Heart right ventricle (tissue), 16 donors: ENCODE measurements at regions of chr9 and their contacts with region 1.

Region 1: DNA sequence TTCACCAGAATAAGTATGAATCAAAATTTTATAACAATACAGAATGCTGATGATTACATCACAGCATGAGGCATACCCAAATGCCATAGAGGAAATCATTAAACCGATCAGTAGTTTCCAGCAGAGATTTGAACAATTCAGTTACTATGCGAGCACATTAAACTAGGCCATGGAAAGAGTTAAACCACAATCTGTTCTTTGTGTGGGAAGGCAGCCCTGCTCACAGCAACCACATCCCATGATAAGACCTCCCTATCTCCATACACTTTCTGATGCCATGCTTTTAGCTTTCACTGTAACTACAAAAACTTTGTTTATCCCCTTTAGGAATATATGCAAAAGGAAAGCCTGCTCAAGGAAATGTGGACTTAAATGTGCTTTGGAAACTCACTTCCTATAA is 4.5 kb downstream of the NFIB start:
- DNase-seq: no peak
- ATAC-seq: peak in 2 of 8 donors; percentile 20 to 21
- H3K4me3 ChIP-seq: peak overlapping the region; percentile 8 to 94 (median 76)
- H3K27ac ChIP-seq: peak overlapping the region; percentile 44 to 100 (median 96)
- H3K4me1 ChIP-seq: peaks cover 2 to 69% (median 48%) of the 10 kb centered on the region in 9 donors
- H3K27me3 ChIP-seq: peaks cover 0 to 37% (median 0%) of the 10 kb centered on the region in 7 donors
- CTCF ChIP-seq: no peak

Region 2: DNA sequence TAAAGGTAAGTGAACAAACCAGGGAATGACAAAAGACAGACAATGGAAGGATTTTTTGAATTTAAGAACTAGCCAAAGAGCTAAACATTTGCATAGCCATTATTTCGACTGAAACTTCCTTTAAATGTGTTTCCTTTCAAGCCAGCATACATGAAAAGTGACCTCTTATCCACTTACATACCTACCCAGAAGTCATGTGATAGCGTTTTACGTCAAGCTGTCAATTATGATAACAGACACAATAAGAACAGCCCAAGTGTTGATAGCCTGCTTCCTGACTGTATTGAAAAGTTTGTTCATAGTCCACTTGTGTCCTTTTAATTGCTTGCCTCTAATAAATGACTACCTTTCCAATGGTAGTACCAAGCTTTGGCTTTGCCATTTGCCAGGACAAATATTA is 201.4 kb before region 1 on chr9:
- intact Hi-C with region 1: loop called in 3 of 10 experiments (anchors 5 to 10 kb)
- DNase-seq: no peak
- ATAC-seq: peak in 7 of 8 donors; percentile 55 to 95 (median 93)
- H3K4me3 ChIP-seq: no peak overlapping the region
- H3K27ac ChIP-seq: peak overlapping the region in 9 of 10 donors; percentile 18 to 71 (median 48)
- H3K4me1 ChIP-seq: peaks cover 0 to 56% (median 20%) of the 10 kb centered on the region in 9 donors
- H3K27me3 ChIP-seq: no peaks in the 10 kb centered on the region
- CTCF ChIP-seq: no peak

Region 3: DNA sequence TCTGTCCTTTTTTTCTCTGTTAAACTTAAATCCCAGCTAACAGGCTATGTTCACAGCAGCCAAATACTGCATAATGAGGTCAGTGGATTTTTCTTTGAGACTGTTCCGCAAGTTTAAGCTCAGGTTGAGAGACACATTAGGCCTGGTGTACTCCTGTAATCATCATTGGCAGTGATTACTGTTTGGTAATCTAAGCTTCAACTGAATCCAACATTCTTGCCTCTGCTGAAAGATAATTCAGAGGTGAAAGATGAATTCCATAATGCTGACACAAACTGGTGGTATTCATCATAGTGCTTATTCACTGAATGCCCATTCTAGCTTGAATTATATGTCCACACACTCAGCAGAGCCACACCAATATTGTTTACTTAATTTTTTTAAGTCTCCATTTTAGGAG is 103.9 kb before region 1 on chr9:
- intact Hi-C with region 1: loop called in 2 of 10 experiments (anchors 2 to 5 kb)
- DNase-seq: no peak
- ATAC-seq: peak in 5 of 8 donors; percentile 41 to 72 (median 45)
- H3K4me3 ChIP-seq: no peak overlapping the region
- H3K27ac ChIP-seq: peak overlapping the region in 8 of 10 donors; percentile 48 to 84 (median 70)
- H3K4me1 ChIP-seq: peaks cover 5 to 93% (median 64%) of the 10 kb centered on the region in 9 donors
- H3K27me3 ChIP-seq: no peaks in the 10 kb centered on the region
- CTCF ChIP-seq: no peak

Region 4: DNA sequence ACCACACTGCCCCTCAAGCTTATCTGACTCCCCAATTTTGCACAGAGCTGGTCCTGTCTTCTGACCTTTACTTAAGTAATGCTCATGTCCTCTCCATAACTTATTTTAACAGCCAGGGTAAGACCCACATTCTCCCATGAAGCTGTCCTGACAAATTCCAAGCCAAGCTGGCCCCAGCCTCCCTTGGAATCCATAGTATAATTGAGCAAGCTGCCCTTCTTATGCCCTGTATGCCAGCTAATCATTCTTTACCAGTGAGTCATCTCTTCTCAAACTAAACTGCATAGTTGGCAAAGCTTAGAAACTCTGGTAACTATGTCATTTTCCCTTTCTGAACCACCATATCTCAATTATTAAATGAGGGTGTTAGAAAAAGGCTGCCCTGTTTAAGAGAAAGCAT is 87.8 kb before region 1 on chr9:
- intact Hi-C with region 1: no loop called
- DNase-seq: no peak
- ATAC-seq: peak; percentile 61 to 88 (median 80)
- H3K4me3 ChIP-seq: no peak overlapping the region
- H3K27ac ChIP-seq: peak overlapping the region in 7 of 10 donors; percentile 1 to 84 (median 79)
- H3K4me1 ChIP-seq: peaks cover 11 to 78% (median 64%) of the 10 kb centered on the region in 9 donors
- H3K27me3 ChIP-seq: no peaks in the 10 kb centered on the region
- CTCF ChIP-seq: no peak

Region 5: GRCh38 chr9:14251154-14252071 is 58.0 kb before region 1 on chr9:
- intact Hi-C with region 1: loop called in 5 of 10 experiments (anchors 5 to 10 kb)
- DNase-seq: peak; percentile 82 to 87
- ATAC-seq: peak; percentile 88 to 98 (median 94)
- H3K4me3 ChIP-seq: peak overlapping the region in 5 of 10 donors; percentile 7 to 23 (median 12)
- H3K27ac ChIP-seq: peak overlapping the region in 9 of 10 donors; percentile 49 to 82 (median 71)
- H3K4me1 ChIP-seq: peaks cover 20 to 87% (median 63%) of the 10 kb centered on the region in 9 donors
- H3K27me3 ChIP-seq: no peaks in the 10 kb centered on the region
- CTCF ChIP-seq: no peak

Region 6: GRCh38 chr9:14258660-14259239 is 50.7 kb before region 1 on chr9:
- intact Hi-C with region 1: loop called in 6 of 10 experiments (anchors 5 to 10 kb)
- DNase-seq: no peak
- ATAC-seq: no peak
- H3K4me3 ChIP-seq: no peak overlapping the region
- H3K27ac ChIP-seq: peak overlapping the region in 5 of 10 donors; percentile 5 to 78 (median 29)
- H3K4me1 ChIP-seq: peaks cover 19 to 87% (median 62%) of the 10 kb centered on the region in 9 donors
- H3K27me3 ChIP-seq: no peaks in the 10 kb centered on the region
- CTCF ChIP-seq: no peak

Region 7: GRCh38 chr9:14271093-14271673 is 38.2 kb before region 1 on chr9:
- intact Hi-C with region 1: loop called in 4 of 10 experiments (anchors 5 kb)
- DNase-seq: peak; percentile 71 to 87
- ATAC-seq: peak; percentile 62 to 84 (median 70)
- H3K4me3 ChIP-seq: peak overlapping the region in 3 of 10 donors; percentile 4 to 9 (median 8)
- H3K27ac ChIP-seq: peak overlapping the region in 8 of 10 donors; percentile 0 to 84 (median 34)
- H3K4me1 ChIP-seq: peaks cover 22 to 77% (median 69%) of the 10 kb centered on the region in 9 donors
- H3K27me3 ChIP-seq: no peaks in the 10 kb centered on the region
- CTCF ChIP-seq: no peak

Region 8: GRCh38 chr9:14383294-14383693 is 73.9 kb after region 1 on chr9:
- intact Hi-C with region 1: no loop called
- DNase-seq: peak in 1 of 2 donors; percentile 62
- ATAC-seq: peak in 6 of 8 donors; percentile 66 to 80 (median 70)
- H3K4me3 ChIP-seq: no peak overlapping the region
- H3K27ac ChIP-seq: peak overlapping the region in 3 of 10 donors; percentile 37 to 42 (median 39)
- H3K4me1 ChIP-seq: peaks cover 0 to 26% (median 4%) of the 10 kb centered on the region in 9 donors
- H3K27me3 ChIP-seq: no peaks in the 10 kb centered on the region
- CTCF ChIP-seq: no peak

Region 9: DNA sequence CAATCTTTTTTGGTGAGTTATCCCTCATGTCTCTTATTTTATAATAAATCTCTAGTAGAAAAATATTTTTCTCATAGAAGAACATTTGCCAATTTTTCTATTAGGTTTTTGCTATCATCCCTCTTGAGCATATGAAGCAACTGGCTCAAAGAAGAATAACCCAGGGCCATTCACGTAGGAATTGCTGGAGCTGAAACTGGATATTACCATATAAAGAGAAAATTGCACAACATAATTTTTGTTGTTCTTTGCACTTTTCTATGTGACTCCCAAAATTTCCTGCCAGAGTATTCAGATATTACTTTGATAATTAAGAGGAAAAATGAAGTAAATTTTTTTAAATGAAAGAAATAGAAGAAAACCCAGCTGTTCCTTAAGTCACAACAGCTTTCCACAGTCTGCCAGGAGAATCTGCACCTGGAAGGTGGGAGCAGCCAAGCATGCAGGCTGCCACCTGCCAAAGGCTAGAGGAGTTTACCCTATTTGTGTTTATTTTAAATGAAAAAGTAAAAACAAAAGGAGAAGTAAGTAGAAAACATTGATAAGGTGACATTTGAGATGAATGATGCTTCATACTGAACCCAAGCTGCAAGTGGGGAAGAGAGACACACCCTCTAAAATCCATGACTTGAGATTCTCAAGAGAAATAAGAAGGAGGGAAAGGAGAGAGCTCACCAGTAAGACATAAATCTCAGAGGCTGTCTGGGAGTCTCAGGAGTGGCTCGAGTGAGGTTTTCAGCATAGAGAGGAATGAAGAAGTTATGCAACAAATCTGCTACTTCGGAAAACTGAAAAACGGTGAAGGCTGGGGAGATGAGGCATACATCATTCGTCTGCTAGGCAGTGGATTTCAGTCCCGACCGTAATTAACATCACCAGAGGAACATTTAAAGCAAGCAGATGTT is 632.4 kb after region 1 on chr9:
- intact Hi-C with region 1: no loop called
- DNase-seq: no peak
- ATAC-seq: peak in 7 of 8 donors; percentile 62 to 84 (median 76)
- H3K4me3 ChIP-seq: peak overlapping the region in 1 of 10 donors; percentile 3
- H3K27ac ChIP-seq: peak overlapping the region in 7 of 10 donors; percentile 33 to 66 (median 54)
- H3K4me1 ChIP-seq: peaks cover 0 to 5% (median 0%) of the 10 kb centered on the region in 9 donors
- H3K27me3 ChIP-seq: no peaks in the 10 kb centered on the region
- CTCF ChIP-seq: no peak

Region 10: DNA sequence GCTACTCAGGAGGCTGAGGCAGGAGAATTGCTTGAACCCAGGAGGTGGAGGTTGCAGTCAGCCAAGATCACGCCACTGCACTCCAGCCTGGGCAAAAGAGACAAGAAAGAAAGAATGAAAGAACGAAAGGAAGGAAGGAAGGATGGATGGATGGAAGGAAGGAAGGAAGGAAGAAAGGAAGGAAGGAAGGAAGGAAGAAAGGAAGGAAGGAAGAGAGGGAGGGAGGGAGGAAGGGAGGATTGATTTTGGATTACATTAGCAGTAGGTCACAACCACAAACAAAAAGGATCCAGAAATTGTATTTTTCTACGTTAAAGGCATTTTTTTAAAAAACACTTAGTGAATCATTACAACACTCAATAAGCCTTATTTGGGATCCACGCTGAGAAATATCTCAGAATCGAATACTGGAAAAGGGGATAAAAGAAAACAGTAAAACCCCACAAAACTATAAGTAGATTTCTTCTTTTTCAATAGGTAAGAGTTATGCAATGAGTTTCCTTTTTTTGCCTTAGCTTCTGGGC is 737.7 kb after region 1 on chr9:
- intact Hi-C with region 1: no loop called
- DNase-seq: no peak
- ATAC-seq: no peak
- H3K4me3 ChIP-seq: no peak overlapping the region
- H3K27ac ChIP-seq: no peak overlapping the region
- H3K4me1 ChIP-seq: no peaks in the 10 kb centered on the region
- H3K27me3 ChIP-seq: no peaks in the 10 kb centered on the region
- CTCF ChIP-seq: no peak